Gastrocnemius medialis (tissue), 4 donors: ENCODE measurements at regions of chr1 and their contacts with region 1.

Region 1: DNA sequence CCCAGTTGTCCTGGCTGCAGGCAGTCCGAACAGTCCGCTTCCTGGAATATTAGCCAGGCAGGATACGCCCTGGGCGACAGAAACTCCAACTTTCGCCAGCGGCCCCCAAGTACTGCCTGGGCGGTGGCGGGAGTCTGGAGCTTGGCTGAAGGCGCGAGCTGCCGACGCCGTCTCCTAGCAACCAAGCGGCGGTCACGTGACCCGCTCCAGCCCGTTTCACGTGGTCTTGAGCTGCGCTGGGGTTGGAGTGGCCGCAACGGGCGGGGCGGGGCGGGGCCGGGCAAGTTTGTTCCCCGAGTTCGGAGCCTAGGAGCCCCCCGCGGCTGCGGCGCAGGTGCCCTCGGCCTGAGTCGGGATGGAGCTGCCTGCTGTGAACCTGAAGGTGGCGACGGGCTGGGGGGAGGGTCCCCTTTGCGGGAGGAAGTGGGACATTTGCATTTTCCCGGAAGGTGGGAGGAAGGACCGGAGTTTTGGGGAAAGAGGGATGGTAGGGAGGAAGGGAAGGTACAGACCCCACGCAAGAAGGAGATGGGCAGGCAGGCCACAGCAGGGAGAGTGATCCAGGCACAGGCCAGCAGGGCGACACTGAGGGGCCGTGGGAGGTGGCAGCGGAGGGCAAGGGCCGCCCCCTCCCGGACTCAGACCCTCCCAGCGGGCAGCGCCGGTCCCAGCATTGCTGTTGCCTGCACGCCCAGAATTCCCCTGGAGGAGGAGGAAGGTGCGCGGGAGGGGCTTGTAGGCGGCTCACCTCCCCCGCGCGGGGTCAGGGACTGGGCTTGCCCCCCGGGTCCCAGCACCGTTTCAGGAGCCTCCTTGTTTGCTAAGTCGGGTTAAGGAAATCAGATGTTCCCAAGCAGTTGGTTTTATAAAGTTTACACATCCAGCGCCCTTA is at the start of gene AGTRAP:
- DNase-seq: peak; percentile 93 to 96
- ATAC-seq: peak; percentile 54 to 68
- H3K4me3 ChIP-seq: peak within 1 kb of the TSS; percentile 86 to 97 (median 92)
- H3K27ac ChIP-seq: peak within 1 kb of the TSS; percentile 90 to 98 (median 94)
- H3K4me1 ChIP-seq: peaks cover 31 to 39% of the 10 kb centered on the region in 2 donors
- H3K27me3 ChIP-seq: no peaks in the 10 kb centered on the region
- CTCF ChIP-seq: peak in 2 of 5 experiments; percentile 27
- POLR2A ChIP-seq: peak; percentile 62 to 87
- total RNA-seq, gene AGTRAP: 37.8 to 144 (median 103) TPM

Region 2: GRCh38 chr1:11012250-11013171 is 723.6 kb before region 1 on chr1 and contains the start of gene TARDBP:
- in situ Hi-C with region 1: no loop called
- intact Hi-C with region 1: loop called (anchors 5 kb)
- DNase-seq: peak; percentile 75 to 84
- ATAC-seq: peak; percentile 93 to 95
- H3K4me3 ChIP-seq: peak within 1 kb of the TSS; percentile 83 to 96 (median 90)
- H3K27ac ChIP-seq: peak within 1 kb of the TSS; percentile 93 to 99 (median 97)
- H3K4me1 ChIP-seq: peaks cover 37 to 39% of the 10 kb centered on the region in 2 donors
- H3K27me3 ChIP-seq: no peaks in the 10 kb centered on the region
- CTCF ChIP-seq: no peak
- POLR2A ChIP-seq: peak; percentile 97 to 99
- total RNA-seq, gene TARDBP: 72.0 to 101 (median 85.5) TPM

Region 3: GRCh38 chr1:11681071-11681771 is 54.9 kb before region 1 on chr1 and contains the start of gene MAD2L2:
- in situ Hi-C with region 1: no loop called
- intact Hi-C with region 1: loop called (anchors 5 kb)
- DNase-seq: peak; percentile 65 to 75
- ATAC-seq: peak; percentile 94 to 96
- H3K4me3 ChIP-seq: peak within 1 kb of the TSS; percentile 69 to 91 (median 88)
- H3K27ac ChIP-seq: peak within 1 kb of the TSS; percentile 73 to 86 (median 82)
- H3K4me1 ChIP-seq: peaks cover 3 to 10% of the 10 kb centered on the region in 2 donors
- H3K27me3 ChIP-seq: no peaks in the 10 kb centered on the region
- CTCF ChIP-seq: no peak
- POLR2A ChIP-seq: peak; percentile 46 to 63
- total RNA-seq, gene MAD2L2: 41.2 to 57.4 (median 46.9) TPM

Region 4: GRCh38 chr1:11784993-11785769 is 49.1 kb after region 1 on chr1:
- in situ Hi-C with region 1: loop called in 1 of 4 experiments (anchors 10 kb)
- intact Hi-C with region 1: loop called (anchors 1 kb)
- DNase-seq: peak in 1 of 2 donors; percentile 66
- ATAC-seq: peak in 1 of 2 donors; percentile 43
- H3K4me3 ChIP-seq: peak overlapping the region; percentile 31 to 48 (median 40)
- H3K27ac ChIP-seq: peak overlapping the region; percentile 39 to 98 (median 58)
- H3K4me1 ChIP-seq: peaks cover 47 to 56% of the 10 kb centered on the region in 2 donors
- H3K27me3 ChIP-seq: no peaks in the 10 kb centered on the region
- CTCF ChIP-seq: peak in 4 of 5 experiments; percentile 87 to 95 (median 91)
- POLR2A ChIP-seq: no peak

Region 5: GRCh38 chr1:11805447-11806306 is 69.6 kb after region 1 on chr1 and contains the starts of genes CLCN6 and MTHFR:
- in situ Hi-C with region 1: no loop called
- intact Hi-C with region 1: loop called (anchors 2 kb)
- DNase-seq: peak; percentile 100
- ATAC-seq: peak; percentile 72 to 73
- H3K4me3 ChIP-seq: peak within 1 kb of the TSS; percentile 82 to 95 (median 86)
- H3K27ac ChIP-seq: peak within 1 kb of the TSS; percentile 92 to 99 (median 96)
- H3K4me1 ChIP-seq: peaks cover 57 to 63% of the 10 kb centered on the region in 2 donors
- H3K27me3 ChIP-seq: no peaks in the 10 kb centered on the region
- CTCF ChIP-seq: peak in 1 of 5 experiments; percentile 55
- POLR2A ChIP-seq: peak; percentile 96 to 98
- total RNA-seq, gene CLCN6: 7.1 to 11.9 (median 9.5) TPM
- total RNA-seq, gene MTHFR: 10.2 to 24.7 (median 18.1) TPM

Region 6: DNA sequence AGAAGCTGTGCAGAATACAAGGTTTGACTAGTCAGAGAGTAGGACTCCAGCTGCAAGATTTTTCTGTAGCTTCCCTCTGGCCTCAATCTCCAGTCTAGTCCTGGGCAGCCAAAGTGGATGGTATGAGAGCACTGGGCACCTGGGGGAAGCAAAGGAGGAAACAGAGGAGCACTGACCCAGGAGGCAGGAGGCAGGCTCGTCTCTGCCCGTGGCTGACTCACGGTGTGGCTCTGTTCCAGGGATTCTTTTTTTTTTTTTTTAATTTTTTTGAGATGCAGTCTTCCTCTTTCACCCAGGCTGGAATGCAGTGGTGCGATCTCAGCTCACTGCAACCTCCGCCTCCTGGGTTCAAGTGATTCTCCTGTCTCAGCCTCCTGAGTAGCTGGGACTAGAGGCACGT is 126.8 kb after region 1 on chr1:
- in situ Hi-C with region 1: no loop called
- intact Hi-C with region 1: no loop called
- DNase-seq: no peak
- ATAC-seq: no peak
- H3K4me3 ChIP-seq: no peak overlapping the region
- H3K27ac ChIP-seq: no peak overlapping the region
- H3K4me1 ChIP-seq: no peaks in the 10 kb centered on the region
- H3K27me3 ChIP-seq: peaks cover 22 to 38% (median 28%) of the 10 kb centered on the region in 3 donors
- CTCF ChIP-seq: no peak
- POLR2A ChIP-seq: no peak

Region 7: GRCh38 chr1:11882814-11883538 is 146.9 kb after region 1 on chr1:
- in situ Hi-C with region 1: no loop called
- intact Hi-C with region 1: loop called (anchors 5 kb)
- DNase-seq: peak; percentile 73 to 84
- ATAC-seq: peak in 1 of 2 donors; percentile 10
- H3K4me3 ChIP-seq: no peak overlapping the region
- H3K27ac ChIP-seq: peak overlapping the region; percentile 6 to 97 (median 52)
- H3K4me1 ChIP-seq: peaks cover 57 to 75% of the 10 kb centered on the region in 2 donors
- H3K27me3 ChIP-seq: no peaks in the 10 kb centered on the region
- CTCF ChIP-seq: no peak
- POLR2A ChIP-seq: peak in 1 of 2 donors; percentile 43

Region 8: DNA sequence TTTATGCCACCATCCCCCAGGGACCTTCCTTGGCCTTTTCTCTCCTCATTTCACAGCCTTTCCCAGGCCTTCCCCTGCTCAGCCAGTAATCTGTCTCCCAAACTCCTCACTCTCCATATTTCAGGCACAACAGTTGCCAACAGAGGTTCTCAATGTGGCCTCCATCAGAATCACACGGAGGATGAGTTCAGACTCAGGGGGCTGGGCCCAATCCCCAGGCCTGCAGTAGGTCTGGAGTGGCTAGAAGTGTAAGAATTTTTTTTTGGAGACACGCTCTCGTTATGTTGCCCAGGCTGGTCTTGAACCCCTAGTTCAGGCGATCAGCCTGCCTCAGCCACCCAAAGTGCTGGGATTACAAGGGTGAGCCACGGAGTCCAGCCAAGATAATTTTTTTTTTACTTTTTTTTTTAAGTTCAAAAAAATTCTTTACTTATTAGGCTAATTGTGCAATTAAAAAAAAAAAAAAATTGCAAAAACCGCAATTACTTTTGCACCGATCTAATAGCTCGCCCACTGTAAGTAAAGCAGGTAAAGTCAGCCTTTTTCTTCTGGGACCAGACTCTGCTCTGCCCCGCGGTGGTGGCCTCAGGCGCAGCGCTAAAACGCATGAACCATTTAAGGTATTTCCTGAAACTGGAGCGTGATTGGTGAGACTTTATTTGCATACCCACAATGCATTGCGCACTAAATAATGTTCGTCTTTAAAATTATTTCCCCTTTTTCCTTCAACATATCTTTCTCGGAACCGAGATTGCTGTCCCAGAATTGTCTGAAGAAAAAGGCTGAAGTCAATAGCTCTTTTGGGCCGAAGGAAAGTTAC is 171.4 kb after region 1 on chr1:
- in situ Hi-C with region 1: no loop called
- intact Hi-C with region 1: loop called (anchors 5 kb)
- DNase-seq: peak; percentile 84 to 94
- ATAC-seq: peak; percentile 72 to 74
- H3K4me3 ChIP-seq: peak overlapping the region in 2 of 4 donors; percentile 86 to 93
- H3K27ac ChIP-seq: peak overlapping the region; percentile 95 to 99 (median 98)
- H3K4me1 ChIP-seq: no peaks in the 10 kb centered on the region
- H3K27me3 ChIP-seq: no peaks in the 10 kb centered on the region
- CTCF ChIP-seq: peak; percentile 78 to 93 (median 87)
- POLR2A ChIP-seq: no peak